Ovary (tissue), 10 donors: ENCODE measurements at regions of chr17 and their contacts with region 1.

Region 1: DNA sequence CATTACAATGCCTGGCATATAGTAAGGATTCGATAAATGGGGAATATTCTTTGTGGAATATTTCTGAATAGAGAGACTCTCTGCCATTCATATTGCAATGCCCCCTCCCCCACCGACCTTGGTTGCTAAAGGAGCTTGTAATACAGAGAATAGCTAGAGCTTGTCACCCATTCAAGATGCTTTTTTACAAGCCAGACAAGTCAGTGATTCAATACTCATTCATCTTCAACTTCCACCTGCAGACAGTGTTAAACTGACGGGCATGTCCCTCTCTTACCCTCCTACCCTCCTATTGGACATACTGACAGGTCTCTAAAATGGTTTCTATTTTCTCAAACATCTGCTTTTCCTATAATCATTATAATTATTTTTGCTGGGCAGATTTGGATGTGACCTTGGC is 257.4 kb downstream of the KCNJ2 start:
- DNase-seq: no peak
- H3K4me3 ChIP-seq: no peak overlapping the region
- H3K27ac ChIP-seq: no peak overlapping the region
- H3K4me1 ChIP-seq: no peaks in the 10 kb centered on the region
- H3K27me3 ChIP-seq: no peaks in the 10 kb centered on the region
- CTCF ChIP-seq: no peak
- EP300 ChIP-seq: no peak
- POLR2A ChIP-seq: no peak

Region 2: GRCh38 chr17:70493277-70493874 is 66.6 kb after region 1 on chr17:
- intact Hi-C with region 1: loop called in 1 of 4 experiments (anchors 5 kb)
- DNase-seq: no peak
- H3K4me3 ChIP-seq: no peak overlapping the region
- H3K27ac ChIP-seq: no peak overlapping the region
- H3K4me1 ChIP-seq: no peaks in the 10 kb centered on the region
- H3K27me3 ChIP-seq: no peaks in the 10 kb centered on the region
- CTCF ChIP-seq: no peak
- EP300 ChIP-seq: no peak
- POLR2A ChIP-seq: no peak